Activated T-helper 1 cell treated with anti-CD3 and anti-CD28 coated beads, Interleukin-12 subunit alpha, Interleukin-12 subunit beta, Interleukin-2, Interleukin-4 antibody, amounts not matched to agents 30 ng/mL and 10 ng/mL and 1 ng/mL, durations not matched to agents 14 hours and 24 hours and 36 hours (primary cell): ENCODE measurements at regions of chr2 and their contacts with region 1.

Region 1: GRCh38 chr2:72144632-72145288 is 2.9 kb downstream of the CYP26B1 start:
- DNase-seq: no peak
- H3K4me3 Mint-ChIP-seq: no peak overlapping the region
- H3K27ac Mint-ChIP-seq: peak overlapping the region; percentile 52
- H3K4me1 Mint-ChIP-seq: peaks cover 16% of the 10 kb centered on the region
- H3K27me3 Mint-ChIP-seq: peaks cover 51% of the 10 kb centered on the region

Region 2: GRCh38 chr2:72915907-72916742 is 771.4 kb after region 1 on chr2:
- intact Hi-C with region 1: loop called (anchors 2 kb)
- DNase-seq: no peak
- H3K4me3 Mint-ChIP-seq: no peak overlapping the region
- H3K27ac Mint-ChIP-seq: no peak overlapping the region
- H3K4me1 Mint-ChIP-seq: peaks cover 18% of the 10 kb centered on the region
- H3K27me3 Mint-ChIP-seq: peaks cover 68% of the 10 kb centered on the region